ENCODE measurements at regions of chr20 and their contacts with region 1.

Region 1: GRCh38 chr20:34876162-34877001 is at the start of gene ACSS2:
- DNase-seq: peak; percentile 91
- H3K4me3 ChIP-seq: peak within 1 kb of the TSS; percentile 71
- CTCF ChIP-seq: no peak

Region 2: DNA sequence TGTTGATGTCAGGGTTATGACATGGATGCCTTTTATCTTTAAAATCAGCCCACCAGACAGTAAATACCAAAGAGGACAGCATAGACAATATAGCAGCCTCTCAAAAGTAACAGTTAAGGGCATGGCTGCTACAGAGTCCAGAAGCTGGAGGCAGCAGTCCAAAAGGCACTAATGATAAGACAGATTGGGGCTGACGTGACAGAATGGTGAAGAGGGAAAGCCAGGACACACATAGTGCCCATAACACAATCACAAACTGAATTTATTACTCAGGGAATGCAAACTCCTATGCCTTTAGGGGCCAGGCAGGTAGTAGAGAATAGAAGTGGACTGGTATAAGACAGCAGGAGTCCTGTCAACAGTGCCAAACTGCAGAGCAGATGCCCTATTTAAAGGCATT is 131.5 kb before region 1 on chr20:
- CTCF ChIA-PET with region 1: no interaction called
- POLR2A ChIA-PET with region 1: no interaction called
- DNase-seq: no peak
- H3K4me3 ChIP-seq: no peak overlapping the region
- CTCF ChIP-seq: no peak

Region 3: DNA sequence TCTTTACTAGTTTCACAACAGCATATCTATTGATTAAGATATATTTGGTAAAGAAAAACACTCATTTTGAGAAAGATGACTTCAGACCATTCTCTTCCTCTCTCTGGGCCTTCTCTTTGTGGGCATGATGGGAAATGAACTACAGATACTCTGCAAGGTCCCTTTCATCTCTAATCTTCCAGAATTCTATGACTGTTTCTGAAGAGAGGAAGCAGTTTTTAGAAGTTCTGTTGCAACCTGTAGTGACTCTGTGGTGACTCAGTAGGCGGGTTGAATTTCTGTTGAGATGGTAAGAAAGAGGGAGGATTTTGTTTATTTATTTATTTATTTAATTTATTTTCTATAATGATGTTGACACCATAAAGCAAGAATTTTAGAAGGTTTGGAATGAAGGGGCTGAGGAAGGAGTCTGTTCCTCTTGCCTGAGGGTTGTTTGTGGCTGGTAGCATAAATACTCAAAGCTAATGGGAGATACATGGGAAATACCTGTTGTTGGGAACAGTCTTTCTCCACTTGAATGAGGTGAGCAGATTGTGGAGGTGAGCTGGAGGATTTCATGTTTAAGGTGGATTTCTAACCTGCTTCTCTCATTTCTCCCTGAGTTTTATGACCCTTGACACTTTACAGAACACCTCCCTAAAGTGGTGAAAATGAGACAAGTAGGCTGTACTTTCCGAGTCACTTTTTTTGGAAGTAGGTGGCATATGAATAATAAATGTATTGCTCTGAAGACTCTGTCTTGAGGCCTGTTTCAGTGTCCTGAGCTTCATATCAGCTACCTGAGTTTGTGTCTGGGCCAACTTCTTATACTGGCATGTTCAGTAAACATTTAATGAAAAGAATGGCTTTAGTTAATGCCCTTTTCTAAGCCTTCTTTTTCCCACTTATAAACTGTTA is 15.0 kb after region 1 on chr20:
- CTCF ChIA-PET with region 1: interaction called, 15 read pairs
- POLR2A ChIA-PET with region 1: no interaction called
- DNase-seq: peak; percentile 14
- H3K4me3 ChIP-seq: no peak overlapping the region
- CTCF ChIP-seq: no peak

Region 4: DNA sequence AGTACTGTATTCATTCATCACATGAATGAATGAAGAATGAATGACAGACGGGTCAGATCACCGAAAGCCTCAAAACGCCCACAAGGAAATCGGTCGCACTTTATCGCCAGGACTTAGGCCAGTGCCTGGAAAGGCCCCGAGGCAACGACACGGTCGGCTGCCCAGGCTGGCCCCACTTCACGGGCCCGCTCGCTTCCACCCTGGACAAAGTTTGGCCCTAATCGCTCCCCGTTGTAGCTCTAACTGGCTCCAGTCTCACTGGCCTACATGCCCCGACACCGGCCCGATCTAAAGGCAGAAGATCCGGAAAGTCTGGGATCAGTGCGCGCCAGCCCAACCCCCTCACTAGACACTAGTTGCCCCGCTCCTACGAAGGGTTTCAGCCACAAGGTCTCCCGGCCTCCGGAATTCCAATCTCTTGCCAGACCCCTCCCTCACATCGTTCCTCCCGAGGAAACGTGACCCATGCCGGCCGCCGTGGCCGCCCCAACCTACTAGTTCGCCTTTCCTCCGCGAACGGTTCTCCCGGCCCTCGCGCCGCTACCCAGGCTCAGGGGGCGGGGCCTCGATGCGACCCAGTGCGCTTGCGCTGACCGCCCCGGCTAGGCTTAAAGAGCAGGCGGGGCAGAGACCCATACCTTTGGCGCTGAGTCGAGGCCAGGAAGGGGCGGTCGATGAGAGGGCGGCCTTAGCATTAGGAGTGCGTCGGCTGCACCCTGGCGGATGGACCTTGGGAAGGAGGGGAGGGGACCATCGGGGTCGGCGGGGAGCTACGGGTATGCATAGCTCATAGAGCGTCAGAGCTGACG is 79.1 kb after region 1 on chr20 and contains the starts of genes GSS and MYH7B:
- CTCF ChIA-PET with region 1: interaction called, 245 read pairs
- POLR2A ChIA-PET with region 1: interaction called, 16 read pairs
- DNase-seq: peak; percentile 73
- H3K4me3 ChIP-seq: peak within 1 kb of the TSS; percentile 78
- CTCF ChIP-seq: peak; percentile 64

Region 5: GRCh38 chr20:34970193-34970840 is 93.9 kb after region 1 on chr20:
- CTCF ChIA-PET with region 1: interaction called, 44 read pairs
- POLR2A ChIA-PET with region 1: no interaction called
- DNase-seq: no peak
- H3K4me3 ChIP-seq: no peak overlapping the region
- CTCF ChIP-seq: no peak

Region 6: GRCh38 chr20:35001596-35002362 is 125.4 kb after region 1 on chr20:
- CTCF ChIA-PET with region 1: interaction called, 111 read pairs
- POLR2A ChIA-PET with region 1: interaction called, 3 read pairs
- DNase-seq: no peak
- H3K4me3 ChIP-seq: no peak overlapping the region
- CTCF ChIP-seq: peak; percentile 22

Region 7: DNA sequence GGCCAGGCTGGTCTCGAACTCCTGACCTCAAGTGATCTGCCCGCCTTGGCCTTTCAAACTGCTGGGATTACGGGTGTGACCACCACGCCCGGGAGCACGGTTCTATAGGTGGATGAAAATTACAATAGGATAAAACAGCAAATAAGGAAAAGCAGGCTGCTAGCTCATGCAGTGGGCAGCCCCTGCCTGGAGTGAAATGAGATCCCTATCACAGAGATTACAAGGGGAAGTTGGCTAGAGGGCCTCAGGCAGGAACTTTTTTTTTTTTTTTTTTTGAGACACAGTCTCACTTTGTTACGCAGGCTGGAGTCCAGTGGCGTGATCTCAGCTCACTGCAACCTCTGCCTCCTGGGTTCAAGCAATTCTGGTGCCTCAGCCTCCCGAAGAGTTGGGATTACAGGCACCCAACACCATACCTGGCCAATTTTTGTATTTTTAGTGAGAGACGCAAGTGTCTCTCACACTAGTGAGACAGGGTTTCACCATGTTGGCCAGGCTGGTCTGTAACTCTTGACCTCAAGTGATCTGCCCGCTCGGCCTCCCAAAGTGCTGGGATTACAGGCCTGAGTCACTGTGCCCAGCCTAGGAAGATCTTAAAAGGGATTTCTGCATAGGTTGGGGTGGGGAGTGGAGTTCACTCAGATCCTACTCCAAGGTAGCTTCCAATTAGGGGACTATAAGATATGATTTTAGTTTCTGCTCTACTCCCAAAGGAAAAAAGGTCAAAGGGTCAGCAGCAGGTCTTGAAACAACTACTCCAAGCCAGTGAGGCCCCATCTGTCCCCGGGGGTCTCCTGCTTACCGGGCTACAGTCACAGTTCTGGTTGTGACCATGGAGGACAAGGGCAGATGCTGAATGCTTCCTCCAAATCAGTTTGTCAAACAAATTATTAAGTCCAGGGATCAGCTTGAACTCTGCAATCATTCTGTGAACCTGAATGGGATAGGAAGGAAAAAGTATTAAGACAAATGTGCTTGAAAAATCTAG is 139.1 kb after region 1 on chr20:
- CTCF ChIA-PET with region 1: interaction called, 24 read pairs
- POLR2A ChIA-PET with region 1: no interaction called
- DNase-seq: no peak
- H3K4me3 ChIP-seq: no peak overlapping the region
- CTCF ChIP-seq: no peak

Region 8: GRCh38 chr20:35063168-35063567 is 186.8 kb after region 1 on chr20:
- CTCF ChIA-PET with region 1: interaction called, 11 read pairs
- POLR2A ChIA-PET with region 1: no interaction called
- DNase-seq: no peak
- H3K4me3 ChIP-seq: no peak overlapping the region
- CTCF ChIP-seq: no peak

Measured in AG04449 (cell line).